ENCODE measurements at regions of chr7 and their contacts with region 1.

Region 1: GRCh38 chr7:30771174-30771879 is at the start of gene MINDY4:
- DNase-seq: peak; percentile 67
- ATAC-seq: peak; percentile 90
- H3K4me3 ChIP-seq: peak within 1 kb of the TSS; percentile 64 to 93 (median 73)
- H3K4me3 Mint-ChIP-seq: peak within 1 kb of the TSS; percentile 92
- H3K27ac ChIP-seq: peak within 1 kb of the TSS in 1 of 2 donors; percentile 61
- H3K27ac Mint-ChIP-seq: peak within 1 kb of the TSS; percentile 57
- H3K4me1 ChIP-seq: peaks cover 4 to 13% of the 10 kb centered on the region in 2 donors
- H3K4me1 Mint-ChIP-seq: peaks cover 5% of the 10 kb centered on the region
- H3K27me3 ChIP-seq: no peaks in the 10 kb centered on the region
- H3K27me3 Mint-ChIP-seq: no peaks in the 10 kb centered on the region
- CTCF ChIP-seq: no peak
- total RNA-seq, gene MINDY4: 0.75 and 1.1 TPM in 2 replicates

Region 2: GRCh38 chr7:30478349-30479201 is 292.8 kb before region 1 on chr7 and contains the start of gene NOD1:
- CTCF ChIA-PET with region 1: no interaction called
- POLR2A ChIA-PET with region 1: no interaction called
- intact Hi-C with region 1: no loop called
- DNase-seq: peak; percentile 74
- ATAC-seq: peak; percentile 89
- H3K4me3 ChIP-seq: peak within 1 kb of the TSS; percentile 62 to 87 (median 84)
- H3K4me3 Mint-ChIP-seq: peak within 1 kb of the TSS; percentile 93
- H3K27ac ChIP-seq: peak within 1 kb of the TSS; percentile 59 to 66
- H3K27ac Mint-ChIP-seq: peak within 1 kb of the TSS; percentile 88
- H3K4me1 ChIP-seq: peaks cover 46 to 47% of the 10 kb centered on the region in 2 donors
- H3K4me1 Mint-ChIP-seq: peaks cover 58% of the 10 kb centered on the region
- H3K27me3 ChIP-seq: no peaks in the 10 kb centered on the region
- H3K27me3 Mint-ChIP-seq: no peaks in the 10 kb centered on the region
- CTCF ChIP-seq: no peak
- total RNA-seq, gene NOD1: 28.8 and 31.2 TPM in 2 replicates

Region 3: GRCh38 chr7:30612658-30613265 is 158.6 kb before region 1 on chr7:
- CTCF ChIA-PET with region 1: no interaction called
- POLR2A ChIA-PET with region 1: no interaction called
- intact Hi-C with region 1: no loop called
- DNase-seq: no peak
- ATAC-seq: no peak
- H3K4me3 ChIP-seq: no peak overlapping the region
- H3K4me3 Mint-ChIP-seq: no peak overlapping the region
- H3K27ac ChIP-seq: no peak overlapping the region
- H3K27ac Mint-ChIP-seq: no peak overlapping the region
- H3K4me1 ChIP-seq: no peaks in the 10 kb centered on the region
- H3K4me1 Mint-ChIP-seq: no peaks in the 10 kb centered on the region
- H3K27me3 ChIP-seq: no peaks in the 10 kb centered on the region
- H3K27me3 Mint-ChIP-seq: no peaks in the 10 kb centered on the region
- CTCF ChIP-seq: no peak

Region 4: DNA sequence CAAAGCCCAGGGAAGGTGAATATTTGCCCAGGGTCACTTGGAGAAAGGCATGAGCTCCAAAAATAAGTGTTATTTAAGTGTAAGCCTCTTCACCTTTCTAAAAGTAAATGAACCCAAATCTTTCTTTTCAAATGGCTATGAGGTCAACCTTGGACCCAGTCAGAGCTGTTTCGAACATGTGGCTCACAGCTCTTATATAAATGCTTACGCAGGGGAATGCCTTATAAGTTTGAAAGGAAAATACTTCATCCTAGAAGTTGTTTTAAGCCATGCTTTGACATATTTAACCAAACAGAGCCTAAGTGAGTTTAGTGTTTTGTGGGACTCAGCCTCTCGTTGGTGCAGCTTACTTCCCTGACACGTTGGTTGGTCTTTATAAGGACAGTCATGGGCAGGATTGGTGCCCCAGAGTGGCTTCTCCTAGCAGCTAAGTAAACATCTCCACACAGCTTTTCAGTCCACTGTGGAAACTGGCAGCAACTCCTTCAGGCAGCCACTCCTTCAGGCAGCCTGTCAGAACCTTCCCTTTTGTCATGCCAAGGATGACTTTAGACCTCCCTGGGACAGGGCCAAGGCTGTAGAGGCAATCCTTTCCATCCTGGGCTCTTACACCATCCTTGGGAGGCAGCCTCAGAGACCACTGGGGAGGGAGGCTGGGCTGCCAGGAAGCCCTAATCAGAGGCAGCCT is 43.5 kb after region 1 on chr7:
- CTCF ChIA-PET with region 1: no interaction called
- POLR2A ChIA-PET with region 1: interaction called, 10 read pairs
- intact Hi-C with region 1: no loop called
- DNase-seq: no peak
- ATAC-seq: no peak
- H3K4me3 ChIP-seq: no peak overlapping the region
- H3K4me3 Mint-ChIP-seq: no peak overlapping the region
- H3K27ac ChIP-seq: no peak overlapping the region
- H3K27ac Mint-ChIP-seq: no peak overlapping the region
- H3K4me1 ChIP-seq: no peaks in the 10 kb centered on the region
- H3K4me1 Mint-ChIP-seq: peaks cover 6% of the 10 kb centered on the region
- H3K27me3 ChIP-seq: no peaks in the 10 kb centered on the region
- H3K27me3 Mint-ChIP-seq: no peaks in the 10 kb centered on the region
- CTCF ChIP-seq: no peak

Measured in B cell (primary cell).